Right ventricle myocardium inferior (tissue), 1 donor: ENCODE measurements at regions of chr7 and their contacts with region 1.

Region 1: DNA sequence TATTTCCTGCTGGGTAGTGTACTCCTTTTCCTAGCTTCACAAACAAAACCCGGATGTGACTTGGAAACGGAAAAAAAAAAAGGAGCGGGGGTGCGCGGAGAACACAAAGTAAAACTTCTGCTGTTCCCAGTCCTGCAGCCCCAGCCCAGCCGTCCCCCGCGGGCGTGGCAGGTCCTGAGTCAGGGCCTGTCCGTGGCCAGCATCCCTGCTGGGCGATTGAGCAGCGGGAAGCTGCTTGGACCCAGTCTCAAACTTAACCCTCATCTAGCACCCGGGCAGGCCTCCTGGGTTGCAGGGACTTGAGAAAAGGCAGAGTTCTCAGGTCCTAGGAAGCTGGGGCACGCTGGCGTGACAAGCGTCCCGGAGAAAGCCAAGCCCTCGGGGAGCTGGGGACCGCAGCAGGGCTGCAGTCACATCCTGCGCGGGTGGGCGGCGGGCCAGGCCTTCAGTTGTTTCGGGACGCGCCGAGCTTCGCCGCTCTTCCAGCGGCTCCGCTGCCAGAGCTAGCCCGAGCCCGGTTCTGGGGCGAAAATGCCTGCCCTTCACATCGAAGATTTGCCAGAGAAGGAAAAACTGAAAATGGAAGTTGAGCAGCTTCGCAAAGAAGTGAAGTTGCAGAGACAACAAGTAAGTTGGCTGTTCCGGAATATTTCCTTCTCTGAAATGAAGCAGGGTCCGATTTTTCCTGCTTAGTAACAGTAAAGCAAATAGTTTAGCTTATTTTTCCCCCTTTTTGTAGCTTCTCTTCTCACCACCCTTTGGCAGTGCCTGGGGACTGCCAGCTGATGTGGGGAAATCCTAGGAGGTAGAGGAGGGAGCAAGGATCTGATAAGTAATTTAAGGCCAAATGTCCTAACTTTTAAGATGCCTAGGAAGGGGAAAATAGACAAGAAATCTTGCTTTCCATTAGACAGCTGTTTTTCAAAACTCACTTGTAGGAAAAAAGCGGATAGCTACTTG is at the start of gene GNG11:
- DNase-seq: peak; percentile 91
- ATAC-seq: peak; percentile 94
- total RNA-seq, gene GNG11: 21.6 TPM

Region 2: GRCh38 chr7:94004024-94004951 is 82.4 kb after region 1 on chr7 and contains the start of gene BET1:
- intact Hi-C with region 1: loop called (anchors 5 kb)
- DNase-seq: peak; percentile 99
- ATAC-seq: peak; percentile 99
- total RNA-seq, gene BET1: 14.2 TPM

Region 3: GRCh38 chr7:94016786-94017185 is 94.9 kb after region 1 on chr7:
- intact Hi-C with region 1: no loop called
- DNase-seq: no peak
- ATAC-seq: no peak